Endothelial cell of umbilical vein (primary cell): ENCODE measurements at regions of chr19 and their contacts with region 1.

Region 1: DNA sequence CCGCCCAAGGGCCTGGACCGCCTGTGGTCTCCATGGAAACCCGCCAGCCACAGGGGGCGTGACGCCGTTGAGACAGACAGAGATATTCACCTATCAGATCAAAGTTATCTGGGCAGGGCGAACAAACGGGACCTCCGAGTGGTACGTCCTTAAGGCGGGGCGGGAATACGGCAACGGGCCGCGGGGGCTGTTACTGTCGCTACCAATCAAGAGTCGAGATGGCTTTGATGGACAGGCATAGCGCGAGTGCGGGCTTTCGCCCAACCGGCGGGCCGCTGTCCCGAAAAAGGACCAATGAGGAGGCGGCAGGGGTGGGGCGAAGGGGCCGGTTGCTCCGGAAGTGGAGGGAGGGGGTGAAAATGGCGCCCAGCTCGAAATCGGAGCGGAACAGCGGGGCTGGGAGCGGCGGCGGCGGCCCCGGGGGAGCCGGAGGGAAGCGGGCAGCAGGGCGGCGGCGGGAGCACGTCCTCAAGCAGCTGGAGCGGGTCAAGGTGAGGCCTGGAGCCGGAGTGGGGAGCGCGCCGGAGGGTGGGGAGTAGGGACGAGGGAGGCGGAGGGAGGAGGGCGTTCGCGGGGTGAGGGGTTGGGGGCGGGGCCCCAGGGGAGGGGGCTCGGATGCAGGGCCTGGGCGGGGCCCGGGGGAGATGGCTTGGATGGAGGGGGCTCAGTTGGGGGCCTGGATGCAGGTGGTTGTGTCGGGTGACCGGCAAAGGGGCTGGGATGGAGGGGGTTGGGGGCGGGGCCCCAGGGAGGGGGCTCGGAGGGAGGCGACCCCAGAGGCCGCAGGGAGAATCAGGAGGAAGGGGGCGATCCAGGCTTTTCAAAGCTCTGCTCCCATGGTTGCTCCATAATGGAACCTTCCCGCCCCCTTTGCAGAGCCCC is at the start of gene DCAF15:
- DNase-seq: peak; percentile 100
- H3K4me3 ChIP-seq: peak within 1 kb of the TSS; percentile 76 to 87 (median 83)
- H3K27ac ChIP-seq: peak within 1 kb of the TSS; percentile 63
- H3K4me1 ChIP-seq: peaks cover 10% of the 10 kb centered on the region
- H3K27me3 ChIP-seq: no peaks in the 10 kb centered on the region
- CTCF ChIP-seq: no peak
- POLR2A ChIP-seq: peak; percentile 66
- total RNA-seq, gene DCAF15: 42.4 and 47.9 TPM in 2 replicates

Region 2: DNA sequence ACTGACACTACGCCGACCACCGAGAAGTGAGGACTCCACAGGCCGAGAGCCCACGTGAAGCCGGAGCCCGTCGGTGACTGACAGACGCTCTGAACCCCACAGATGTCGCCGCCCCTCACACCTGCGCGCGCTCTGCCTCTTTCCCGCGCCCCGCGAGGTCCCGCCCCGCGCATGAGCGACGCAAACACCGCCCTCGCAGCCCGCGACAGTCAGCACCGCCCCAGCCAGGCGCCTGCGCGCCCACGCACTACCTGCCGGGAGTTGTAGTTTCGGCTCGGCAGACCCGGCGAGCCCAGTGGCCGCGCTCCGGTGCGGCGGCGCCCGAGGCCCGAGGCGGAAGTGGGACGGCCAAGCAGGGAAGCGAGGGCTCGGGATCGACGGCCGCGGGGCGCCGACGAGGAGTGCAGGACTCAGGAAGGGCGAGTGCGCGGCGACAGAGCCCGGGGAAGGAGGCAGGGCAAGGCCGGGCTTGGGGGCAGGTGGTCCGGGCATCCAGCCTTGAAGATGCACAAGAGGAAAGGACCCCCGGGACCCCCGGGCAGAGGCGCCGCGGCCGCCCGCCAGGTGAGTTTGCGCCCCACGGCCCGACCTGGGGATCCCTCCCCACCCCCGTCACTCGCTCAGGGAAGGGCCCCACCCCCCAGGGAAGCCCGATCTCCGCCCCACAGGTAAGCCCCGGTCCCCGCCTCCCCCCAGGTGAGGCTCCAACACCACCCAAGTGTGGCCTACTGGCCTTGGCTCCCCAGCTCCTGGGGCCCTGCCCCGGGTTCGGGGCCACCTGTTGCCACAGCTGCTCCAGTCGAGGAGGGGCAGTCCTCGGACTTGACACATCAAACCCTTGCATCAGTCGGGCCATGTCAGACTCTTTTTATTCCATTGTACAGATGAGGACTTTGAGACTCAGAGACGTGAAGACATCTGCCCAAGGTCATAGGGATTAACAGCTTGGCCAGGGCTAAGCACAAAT is 46.2 kb before region 1 on chr19 and contains the starts of genes BRME1 and CC2D1A:
- CTCF ChIA-PET with region 1: no interaction called
- POLR2A ChIA-PET with region 1: no interaction called
- dilution Hi-C with region 1: no loop called
- intact Hi-C with region 1: loop called (anchors 1 kb)
- DNase-seq: peak; percentile 85
- H3K4me3 ChIP-seq: peak within 1 kb of the TSS; percentile 78 to 88 (median 85)
- H3K27ac ChIP-seq: peak within 1 kb of the TSS; percentile 45
- H3K4me1 ChIP-seq: peaks cover 7% of the 10 kb centered on the region
- H3K27me3 ChIP-seq: no peaks in the 10 kb centered on the region
- CTCF ChIP-seq: no peak
- POLR2A ChIP-seq: no peak
- total RNA-seq, gene BRME1: 1.5 and 2.5 TPM in 2 replicates
- total RNA-seq, gene CC2D1A: 29.8 and 33.7 TPM in 2 replicates

Region 3: DNA sequence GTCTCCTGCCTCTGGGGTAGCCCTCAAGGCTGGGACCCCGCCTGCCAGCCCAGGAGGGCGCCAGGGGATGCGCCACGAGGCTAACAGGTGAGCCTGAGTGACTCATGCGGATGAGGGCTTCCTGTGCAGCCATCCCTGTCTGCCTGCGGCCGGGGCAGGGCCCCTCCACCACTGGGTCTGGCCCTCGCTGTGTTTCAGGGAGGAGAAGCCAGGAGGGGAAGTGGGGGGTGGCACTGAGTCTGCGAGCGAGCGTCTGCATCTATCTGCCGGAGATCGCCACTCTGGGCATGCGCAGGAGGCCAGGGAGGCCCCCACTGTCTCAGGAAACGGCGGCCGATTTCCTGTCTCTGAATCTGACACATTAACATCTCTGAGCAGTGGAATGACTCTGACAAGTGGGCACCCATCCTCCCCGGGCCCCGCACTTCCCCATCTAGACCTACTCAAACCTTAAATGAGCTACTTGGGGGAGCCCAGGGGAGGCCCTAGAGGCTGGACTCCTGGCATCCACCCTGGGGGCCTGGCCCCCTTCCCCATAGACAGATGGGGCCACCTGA is 34.0 kb after region 1 on chr19:
- CTCF ChIA-PET with region 1: no interaction called
- POLR2A ChIA-PET with region 1: interaction called, 3 read pairs
- dilution Hi-C with region 1: no loop called
- intact Hi-C with region 1: loop called (anchors 2 kb)
- DNase-seq: peak; percentile 90
- H3K4me3 ChIP-seq: peak overlapping the region in 1 of 3 experiments; percentile 15
- H3K27ac ChIP-seq: peak overlapping the region; percentile 84
- H3K4me1 ChIP-seq: peaks cover 22% of the 10 kb centered on the region
- H3K27me3 ChIP-seq: no peaks in the 10 kb centered on the region
- CTCF ChIP-seq: no peak
- POLR2A ChIP-seq: peak; percentile 58

Region 4: DNA sequence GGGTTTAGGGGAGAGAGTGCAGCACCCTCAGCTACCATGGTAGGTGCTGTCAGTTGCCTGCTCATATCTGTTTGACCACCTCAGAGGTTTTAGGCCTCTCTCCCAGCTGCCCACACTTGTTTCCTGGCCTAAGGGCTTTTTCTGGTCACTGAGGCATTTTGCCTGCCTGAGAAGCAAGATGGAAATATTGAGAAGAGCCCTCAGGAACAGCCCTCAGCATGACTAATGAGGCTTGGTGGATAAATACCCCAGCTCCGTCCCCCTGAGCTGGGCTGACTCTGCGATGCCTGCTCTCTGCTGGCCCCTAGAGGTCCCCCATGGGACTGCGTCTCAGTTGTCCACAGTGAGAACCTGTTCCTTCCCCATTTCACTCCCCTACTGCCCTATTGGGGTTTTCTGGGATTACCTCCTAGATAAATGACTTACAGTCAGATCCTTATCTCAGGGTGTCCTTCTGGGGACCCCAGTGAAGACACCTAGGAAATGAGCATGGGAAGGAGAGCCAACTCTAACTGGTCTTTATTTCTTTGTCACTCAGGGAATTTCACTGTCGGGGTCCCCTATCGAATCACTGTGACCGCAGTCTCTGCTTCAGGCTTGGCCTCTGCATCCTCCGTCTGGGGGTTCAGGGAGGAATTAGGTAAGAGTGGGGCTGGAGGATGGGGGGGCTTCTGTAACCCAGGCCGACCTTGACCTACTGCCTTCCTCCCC is 96.2 kb after region 1 on chr19:
- CTCF ChIA-PET with region 1: interaction called, 7 read pairs
- POLR2A ChIA-PET with region 1: no interaction called
- dilution Hi-C with region 1: no loop called
- intact Hi-C with region 1: loop called (anchors 2 kb)
- DNase-seq: peak; percentile 35
- H3K4me3 ChIP-seq: no peak overlapping the region
- H3K27ac ChIP-seq: no peak overlapping the region
- H3K4me1 ChIP-seq: no peaks in the 10 kb centered on the region
- H3K27me3 ChIP-seq: no peaks in the 10 kb centered on the region
- CTCF ChIP-seq: peak; percentile 83 to 91
- POLR2A ChIP-seq: no peak

Region 5: DNA sequence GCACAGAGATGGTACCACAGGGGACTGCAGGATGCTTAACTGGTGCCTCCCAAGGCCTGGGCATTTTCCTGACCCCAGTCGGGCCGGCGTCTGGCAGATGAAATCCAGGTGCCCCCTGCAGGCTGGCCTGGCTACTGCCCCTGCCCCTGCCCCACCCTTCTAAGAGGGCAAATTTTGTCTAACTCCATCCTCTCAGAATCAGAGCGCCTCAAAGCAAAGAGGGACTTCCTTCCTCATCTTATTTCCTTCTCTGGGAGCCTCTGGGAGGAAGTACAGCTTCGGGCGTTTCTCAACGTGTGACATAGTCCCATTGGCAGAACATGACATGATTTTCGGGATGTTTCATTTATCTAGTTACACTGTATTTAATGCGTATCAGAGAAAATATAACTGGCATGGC is 162.5 kb after region 1 on chr19:
- CTCF ChIA-PET with region 1: no interaction called
- POLR2A ChIA-PET with region 1: no interaction called
- dilution Hi-C with region 1: no loop called
- intact Hi-C with region 1: no loop called
- DNase-seq: no peak
- H3K4me3 ChIP-seq: no peak overlapping the region
- H3K27ac ChIP-seq: no peak overlapping the region
- H3K4me1 ChIP-seq: peaks cover 25% of the 10 kb centered on the region
- H3K27me3 ChIP-seq: no peaks in the 10 kb centered on the region
- CTCF ChIP-seq: peak; percentile 39 to 63
- POLR2A ChIP-seq: no peak

Region 6: DNA sequence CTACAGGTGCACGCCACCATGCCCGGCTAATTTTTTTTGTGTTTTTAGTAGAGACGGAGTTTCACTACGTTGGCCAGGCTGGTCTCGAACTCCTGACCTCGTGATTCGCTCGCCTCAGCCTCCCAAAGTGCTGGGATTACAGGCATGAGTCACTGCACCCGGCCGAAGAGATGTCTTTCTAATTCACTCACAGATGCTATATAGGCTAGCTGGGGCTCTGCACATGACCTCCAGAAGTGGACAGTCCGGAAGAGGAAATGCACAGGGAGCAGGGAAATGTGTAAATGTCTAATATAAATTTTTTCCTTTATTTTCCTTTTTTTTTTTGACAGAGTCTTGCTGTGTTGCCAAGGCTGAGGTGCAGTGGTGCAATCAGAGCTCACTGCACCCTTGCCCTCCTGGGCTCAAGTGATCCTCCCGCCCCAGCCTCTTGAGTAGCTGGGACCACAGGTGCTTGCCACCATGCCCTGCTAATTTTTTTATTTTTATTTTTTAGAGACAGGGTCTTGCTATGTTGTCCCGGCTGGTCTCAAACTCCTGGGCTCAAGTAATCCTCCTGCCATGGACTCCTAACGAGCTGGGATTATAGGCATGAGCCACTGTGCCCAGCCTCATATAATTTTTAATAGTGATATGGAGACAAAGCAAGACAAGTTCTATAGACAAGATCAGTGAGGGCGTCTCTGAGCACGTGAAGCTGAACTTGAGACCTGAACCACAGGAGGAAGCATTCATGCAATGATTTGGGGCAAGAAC is 535.2 kb after region 1 on chr19:
- CTCF ChIA-PET with region 1: no interaction called
- POLR2A ChIA-PET with region 1: no interaction called
- dilution Hi-C with region 1: no loop called
- intact Hi-C with region 1: no loop called
- DNase-seq: no peak
- H3K4me3 ChIP-seq: no peak overlapping the region
- H3K27ac ChIP-seq: no peak overlapping the region
- H3K4me1 ChIP-seq: no peaks in the 10 kb centered on the region
- H3K27me3 ChIP-seq: no peaks in the 10 kb centered on the region
- CTCF ChIP-seq: no peak
- POLR2A ChIP-seq: no peak